AG04449 (cell line): ENCODE measurements at regions of chr1 and their contacts with region 1.

Region 1: GRCh38 chr1:100459358-100460114 is 78.4 kb upstream of the GPR88 start:
- DNase-seq: peak; percentile 26
- H3K4me3 ChIP-seq: no peak overlapping the region
- CTCF ChIP-seq: peak; percentile 89

Region 2: DNA sequence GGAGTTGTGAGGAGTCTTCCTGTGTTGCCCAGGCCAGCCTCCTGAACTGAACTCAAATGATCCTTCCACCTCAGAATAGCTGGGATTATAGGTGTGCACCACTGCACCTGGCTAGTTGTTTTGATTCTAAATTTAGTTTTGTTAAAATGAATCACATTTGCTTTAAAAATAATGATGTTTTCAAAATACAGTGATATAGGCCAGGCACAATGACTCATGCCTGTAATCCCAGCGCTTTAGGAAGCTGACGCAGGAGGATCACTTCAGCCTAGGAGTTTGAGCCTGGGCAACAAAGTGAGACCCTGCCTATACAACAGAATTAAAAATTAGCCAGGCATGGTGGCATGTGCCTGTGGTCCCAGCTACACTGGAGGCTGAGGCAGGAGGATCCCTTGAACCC is 169.2 kb before region 1 on chr1:
- CTCF ChIA-PET with region 1: interaction called, 15 read pairs
- POLR2A ChIA-PET with region 1: no interaction called
- DNase-seq: no peak
- H3K4me3 ChIP-seq: no peak overlapping the region
- CTCF ChIP-seq: no peak

Region 3: GRCh38 chr1:100443811-100444571 is 15.5 kb before region 1 on chr1:
- CTCF ChIA-PET with region 1: interaction called, 38 read pairs
- POLR2A ChIA-PET with region 1: no interaction called
- DNase-seq: no peak
- H3K4me3 ChIP-seq: no peak overlapping the region
- CTCF ChIP-seq: no peak

Region 4: DNA sequence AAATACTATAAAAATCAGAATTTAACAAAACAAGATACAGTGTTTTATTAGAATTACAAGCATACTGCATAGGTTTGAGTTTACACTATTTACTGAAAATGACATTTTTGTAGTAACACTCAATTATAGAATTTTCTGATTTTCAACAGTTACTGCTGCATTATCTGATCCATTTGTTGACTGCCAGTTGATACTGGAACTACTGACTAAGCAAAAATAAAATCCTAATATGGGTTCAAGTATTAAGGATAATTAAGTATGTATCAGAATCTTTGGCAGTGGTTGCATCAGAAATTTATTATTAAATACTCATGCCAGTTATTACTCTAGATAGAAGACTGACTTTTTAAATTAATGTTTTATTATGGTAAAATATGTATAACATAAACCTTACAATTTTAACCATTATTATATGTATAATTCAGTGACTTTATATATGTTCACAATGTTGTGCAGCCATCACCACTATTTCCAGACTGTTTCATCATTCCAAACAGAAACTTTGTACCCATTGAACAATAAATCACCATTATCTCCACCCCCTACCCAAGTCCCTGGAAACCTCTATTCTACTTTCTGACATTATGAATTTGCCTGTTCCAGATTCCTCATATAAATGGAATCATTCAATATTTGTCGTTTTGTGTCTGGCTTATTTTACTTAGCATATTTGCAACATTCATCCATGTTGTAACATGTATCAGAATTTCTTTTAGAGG is 20.2 kb after region 1 on chr1:
- CTCF ChIA-PET with region 1: interaction called, 15 read pairs
- POLR2A ChIA-PET with region 1: no interaction called
- DNase-seq: no peak
- H3K4me3 ChIP-seq: no peak overlapping the region
- CTCF ChIP-seq: no peak

Region 5: GRCh38 chr1:100606438-100606837 is 146.9 kb after region 1 on chr1:
- CTCF ChIA-PET with region 1: interaction called, 17 read pairs
- POLR2A ChIA-PET with region 1: no interaction called
- DNase-seq: no peak
- H3K4me3 ChIP-seq: no peak overlapping the region
- CTCF ChIP-seq: peak; percentile 75

Region 6: GRCh38 chr1:100875228-100875627 is 415.7 kb after region 1 on chr1:
- CTCF ChIA-PET with region 1: interaction called, 700 read pairs
- POLR2A ChIA-PET with region 1: no interaction called
- DNase-seq: no peak
- H3K4me3 ChIP-seq: no peak overlapping the region
- CTCF ChIP-seq: no peak